ENCODE measurements at regions of chr11 and their contacts with region 1.

Region 1: GRCh38 chr11:118046051-118046963 is 30.6 kb upstream of the TMPRSS4 start:
- DNase-seq: no peak
- ATAC-seq: no peak
- H3K4me3 ChIP-seq: no peak overlapping the region
- H3K27ac ChIP-seq: peak overlapping the region in 1 of 10 donors; percentile 68
- H3K4me1 ChIP-seq: peaks cover 0 to 13% (median 0%) of the 10 kb centered on the region in 9 donors
- H3K27me3 ChIP-seq: no peaks in the 10 kb centered on the region
- CTCF ChIP-seq: no peak

Region 2: DNA sequence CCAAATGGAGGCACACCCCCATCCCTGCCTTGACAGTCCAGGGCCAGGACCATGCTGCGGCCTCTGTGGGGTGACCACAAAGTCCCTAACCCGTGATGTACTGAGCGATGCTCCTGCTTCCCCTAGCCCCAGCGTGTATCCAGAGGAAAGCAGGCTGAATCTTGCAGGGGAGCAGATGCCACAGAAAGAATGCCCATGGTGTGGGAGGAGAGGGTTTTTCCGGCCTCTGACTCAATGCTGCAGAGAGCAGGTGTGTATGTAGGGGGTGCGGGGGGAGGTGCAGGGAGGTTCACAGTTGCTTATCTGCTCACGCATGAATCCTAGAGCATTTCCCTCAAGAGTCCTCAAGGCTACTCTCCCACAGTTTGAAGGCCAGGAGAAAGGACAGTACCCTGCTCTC is 588.0 kb before region 1 on chr11:
- intact Hi-C with region 1: loop called in 1 of 10 experiments (anchors 10 kb)
- DNase-seq: no peak
- ATAC-seq: no peak
- H3K4me3 ChIP-seq: no peak overlapping the region
- H3K27ac ChIP-seq: no peak overlapping the region
- H3K4me1 ChIP-seq: no peaks in the 10 kb centered on the region
- H3K27me3 ChIP-seq: no peaks in the 10 kb centered on the region
- CTCF ChIP-seq: no peak

Region 3: DNA sequence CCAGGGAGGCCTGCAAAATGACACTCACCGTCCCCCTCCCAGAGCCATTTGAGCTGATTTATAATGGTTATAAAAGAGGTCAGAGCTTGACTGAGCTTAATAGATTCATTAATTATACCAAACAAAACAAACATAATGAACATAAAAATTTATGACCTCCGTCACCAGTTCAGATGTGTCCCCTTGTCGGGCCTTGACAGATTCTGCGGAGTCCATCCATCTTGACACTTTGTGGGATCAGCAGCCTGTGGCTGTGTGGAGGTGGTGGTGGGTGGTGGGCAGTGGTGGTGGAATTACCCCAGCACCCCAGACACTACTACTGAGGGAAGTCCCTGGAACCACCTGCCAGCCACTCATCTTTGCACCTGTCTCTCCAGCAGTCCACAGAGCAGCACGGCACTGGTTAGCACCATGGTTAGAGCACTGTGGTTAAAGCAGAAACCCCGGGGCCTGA is 332.7 kb before region 1 on chr11:
- intact Hi-C with region 1: no loop called
- DNase-seq: no peak
- ATAC-seq: no peak
- H3K4me3 ChIP-seq: no peak overlapping the region
- H3K27ac ChIP-seq: no peak overlapping the region
- H3K4me1 ChIP-seq: peaks cover 0 to 7% (median 0%) of the 10 kb centered on the region in 9 donors
- H3K27me3 ChIP-seq: no peaks in the 10 kb centered on the region
- CTCF ChIP-seq: no peak